ENCODE measurements at regions of chr10 and their contacts with region 1.

Region 1: DNA sequence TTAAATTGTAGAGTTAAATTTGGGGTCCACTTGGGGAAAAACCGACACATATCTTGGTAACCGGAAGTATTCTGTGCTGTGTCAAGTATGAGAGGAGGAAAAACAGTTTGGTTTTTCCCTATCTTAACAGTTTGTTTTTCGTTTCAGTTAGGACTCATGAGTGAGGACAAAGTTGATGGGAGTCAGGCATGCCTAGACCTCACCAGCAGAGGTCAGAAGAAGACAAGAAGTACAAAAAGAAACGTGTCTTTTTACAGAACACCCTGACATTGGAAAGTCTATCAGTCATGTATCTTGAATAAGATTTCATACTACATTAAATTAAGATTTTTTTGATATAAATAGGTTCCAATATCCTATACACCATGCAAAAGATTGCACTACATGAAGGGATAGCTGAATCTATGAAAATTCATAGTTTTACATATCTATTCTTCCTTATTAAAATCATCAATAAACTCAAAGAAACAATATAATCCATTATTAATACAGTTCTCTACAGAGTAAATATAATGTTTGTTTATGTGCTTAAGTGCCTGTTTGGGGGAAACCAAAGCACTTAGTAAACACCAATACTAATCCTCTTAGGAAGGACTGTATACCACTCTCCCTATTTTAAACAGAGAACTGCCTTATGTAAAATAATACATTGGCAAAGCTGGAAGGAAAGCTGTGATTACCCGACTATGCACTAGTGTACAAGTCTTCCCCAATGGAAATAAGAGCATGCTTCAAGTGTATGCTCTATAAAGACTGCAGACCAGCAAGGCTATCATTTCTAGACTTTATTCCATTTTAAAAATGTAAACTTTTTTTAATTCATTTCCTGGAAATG is 95.6 kb downstream of the USP6NL start:
- DNase-seq: no peak

Region 2: DNA sequence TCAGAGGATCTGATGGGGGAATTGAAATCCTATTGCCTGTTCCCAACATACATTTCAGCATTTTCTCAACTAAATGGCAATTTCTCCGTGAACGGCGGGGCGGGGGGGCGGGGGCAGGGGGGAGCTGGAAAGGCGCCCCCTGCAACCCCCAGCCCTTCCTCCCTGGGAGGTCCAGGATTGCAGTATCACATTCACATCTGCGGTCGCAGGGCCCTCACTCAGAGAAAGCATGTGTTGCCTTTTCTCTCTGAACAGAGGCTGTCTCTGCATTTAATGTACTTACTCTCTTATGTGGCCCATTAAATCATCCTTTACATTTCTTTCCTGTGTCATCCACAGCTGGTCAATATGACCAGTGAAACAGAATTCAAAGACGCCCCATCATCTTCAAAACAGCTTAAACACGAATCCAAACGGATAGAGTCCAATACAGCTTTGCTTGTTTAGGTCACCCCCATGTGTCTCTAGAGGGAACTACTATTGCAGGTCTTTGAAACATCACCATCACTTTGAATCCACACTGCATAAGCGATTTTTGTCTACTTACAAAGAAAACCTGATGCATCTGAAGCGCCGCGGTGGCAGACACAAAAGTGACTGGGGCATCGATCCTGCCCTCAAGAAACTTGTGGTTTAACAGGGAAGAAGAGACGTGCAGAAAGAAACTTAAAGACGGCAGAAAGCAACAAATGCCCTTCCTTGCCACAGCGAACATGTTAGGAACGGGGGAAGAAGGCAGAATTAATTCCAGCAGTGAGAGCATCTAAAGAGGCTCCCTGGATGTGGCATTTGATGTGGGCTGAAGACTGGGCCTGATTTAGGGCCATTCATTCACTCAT is 209.3 kb after region 1 on chr10:
- intact Hi-C with region 1: loop called (anchors 1 kb)
- DNase-seq: no peak

Region 3: DNA sequence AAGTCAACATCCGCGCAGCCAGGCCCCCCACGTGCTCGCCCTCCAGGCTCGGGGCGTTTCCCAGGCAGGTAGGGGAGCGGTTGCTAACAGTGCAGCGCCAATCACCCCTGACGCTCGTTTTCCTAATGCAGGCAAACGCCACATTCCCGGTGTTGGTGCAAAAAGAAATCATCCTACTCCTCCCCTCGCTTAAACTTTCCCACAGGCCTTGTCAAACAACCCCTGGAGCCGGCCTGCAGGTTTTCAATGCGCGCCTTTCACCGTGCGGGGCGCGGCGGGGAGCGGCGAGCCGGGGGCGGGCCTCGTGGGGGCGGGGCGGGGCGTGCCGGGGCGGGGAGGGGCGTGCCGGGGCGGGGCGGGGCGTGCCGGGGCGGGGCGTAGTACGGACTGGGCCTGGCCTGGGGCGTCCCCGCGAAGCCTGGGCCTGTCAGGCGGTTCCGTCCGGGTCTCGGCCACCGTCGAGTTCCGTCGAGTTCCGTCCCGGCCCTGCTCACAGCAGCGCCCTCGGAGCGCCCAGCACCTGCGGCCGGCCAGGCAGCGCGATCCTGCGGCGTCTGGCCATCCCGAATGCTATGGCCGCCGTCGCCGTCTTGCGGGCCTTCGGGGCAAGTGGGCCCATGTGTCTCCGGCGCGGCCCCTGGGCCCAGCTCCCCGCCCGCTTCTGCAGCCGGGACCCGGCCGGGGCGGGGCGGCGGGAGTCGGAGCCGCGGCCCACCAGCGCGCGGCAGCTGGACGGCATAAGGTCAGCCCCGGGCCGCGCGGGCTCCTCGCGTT is 226.4 kb after region 1 on chr10 and contains the start of gene ECHDC3:
- intact Hi-C with region 1: loop called (anchors 5 kb)
- DNase-seq: peak; percentile 92
- total RNA-seq, gene ECHDC3: 35.1 TPM

Region 4: GRCh38 chr10:11757821-11758463 is 242.1 kb after region 1 on chr10:
- intact Hi-C with region 1: loop called (anchors 1 kb)
- DNase-seq: peak; percentile 93

Measured in cardiac septum (tissue), 1 donor.